HCT116 (cell line): ENCODE measurements at regions of chr7 and their contacts with region 1.

Region 1: GRCh38 chr7:17706734-17707133 is 233.6 kb downstream of the SNX13 start:
- DNase-seq: peak; percentile 65
- ATAC-seq: peak; percentile 98
- H3K4me3 ChIP-seq: no peak overlapping the region
- H3K27ac ChIP-seq: no peak overlapping the region
- H3K4me1 ChIP-seq: no peaks in the 10 kb centered on the region
- H3K27me3 ChIP-seq: no peaks in the 10 kb centered on the region
- CTCF ChIP-seq: peak; percentile 53 to 71 (median 55)
- POLR2A ChIP-seq: no peak
- RAD21 ChIP-seq: peak; percentile 86

Region 2: GRCh38 chr7:17674166-17674961 is 32.4 kb before region 1 on chr7:
- CTCF ChIA-PET with region 1: no interaction called
- POLR2A ChIA-PET with region 1: no interaction called
- RAD21 ChIA-PET with region 1: no interaction called
- intact Hi-C with region 1: no loop called
- DNase-seq: no peak
- ATAC-seq: no peak
- H3K4me3 ChIP-seq: no peak overlapping the region
- H3K27ac ChIP-seq: no peak overlapping the region
- H3K4me1 ChIP-seq: no peaks in the 10 kb centered on the region
- H3K27me3 ChIP-seq: no peaks in the 10 kb centered on the region
- CTCF ChIP-seq: no peak
- POLR2A ChIP-seq: no peak
- RAD21 ChIP-seq: no peak

Region 3: GRCh38 chr7:18119985-18120384 is 413.3 kb after region 1 on chr7:
- CTCF ChIA-PET with region 1: interaction called, 6 read pairs
- POLR2A ChIA-PET with region 1: no interaction called
- RAD21 ChIA-PET with region 1: no interaction called
- intact Hi-C with region 1: loop called (anchors 2 kb)
- DNase-seq: peak; percentile 3
- ATAC-seq: peak; percentile 52; the same call in 1 of the 2 replicates
- H3K4me3 ChIP-seq: no peak overlapping the region
- H3K27ac ChIP-seq: no peak overlapping the region
- H3K4me1 ChIP-seq: no peaks in the 10 kb centered on the region
- H3K27me3 ChIP-seq: no peaks in the 10 kb centered on the region
- CTCF ChIP-seq: peak; percentile 35 to 51 (median 41); a peak in 4 of 6 replicates
- POLR2A ChIP-seq: no peak
- RAD21 ChIP-seq: peak; percentile 59